Dendritic cell treated with granulocyte-macrophage colony-stimulating factor and Interleukin-4, amounts not matched to agents 40 ng/mL and 50 ng/mL, for 4 days (primary cell): ENCODE measurements at regions of chr5 and their contacts with region 1.

Region 1: GRCh38 chr5:120803282-120803681 is 339.2 kb downstream of the PRR16 start:
- H3K4me3 Mint-ChIP-seq: no peak overlapping the region
- H3K27ac Mint-ChIP-seq: no peak overlapping the region
- H3K4me1 Mint-ChIP-seq: no peaks in the 10 kb centered on the region
- H3K27me3 Mint-ChIP-seq: no peaks in the 10 kb centered on the region

Region 2: GRCh38 chr5:119943148-119943547 is 860.1 kb before region 1 on chr5:
- intact Hi-C with region 1: loop called (anchors 2 kb)
- H3K4me3 Mint-ChIP-seq: no peak overlapping the region
- H3K27ac Mint-ChIP-seq: no peak overlapping the region
- H3K4me1 Mint-ChIP-seq: no peaks in the 10 kb centered on the region
- H3K27me3 Mint-ChIP-seq: no peaks in the 10 kb centered on the region

Region 3: GRCh38 chr5:120314201-120314600 is 489.1 kb before region 1 on chr5:
- intact Hi-C with region 1: no loop called
- H3K4me3 Mint-ChIP-seq: no peak overlapping the region
- H3K27ac Mint-ChIP-seq: no peak overlapping the region
- H3K4me1 Mint-ChIP-seq: peaks cover 6% of the 10 kb centered on the region
- H3K27me3 Mint-ChIP-seq: no peaks in the 10 kb centered on the region

Region 4: GRCh38 chr5:120841103-120841502 is 37.8 kb after region 1 on chr5:
- intact Hi-C with region 1: no loop called
- H3K4me3 Mint-ChIP-seq: no peak overlapping the region
- H3K27ac Mint-ChIP-seq: no peak overlapping the region
- H3K4me1 Mint-ChIP-seq: no peaks in the 10 kb centered on the region
- H3K27me3 Mint-ChIP-seq: no peaks in the 10 kb centered on the region

Region 5: GRCh38 chr5:120886351-120886860 is 83.1 kb after region 1 on chr5:
- intact Hi-C with region 1: no loop called
- H3K4me3 Mint-ChIP-seq: no peak overlapping the region
- H3K27ac Mint-ChIP-seq: no peak overlapping the region
- H3K4me1 Mint-ChIP-seq: no peaks in the 10 kb centered on the region
- H3K27me3 Mint-ChIP-seq: no peaks in the 10 kb centered on the region

Region 6: GRCh38 chr5:120988941-120989340 is 185.7 kb after region 1 on chr5:
- intact Hi-C with region 1: no loop called
- H3K4me3 Mint-ChIP-seq: no peak overlapping the region
- H3K27ac Mint-ChIP-seq: no peak overlapping the region
- H3K4me1 Mint-ChIP-seq: no peaks in the 10 kb centered on the region
- H3K27me3 Mint-ChIP-seq: no peaks in the 10 kb centered on the region